Calu3 (cell line): ENCODE measurements at regions of chr12 and their contacts with region 1.

Region 1: GRCh38 chr12:87925021-87925420 is 104.2 kb downstream of the C12orf50 start:
- DNase-seq: no peak
- H3K4me3 Mint-ChIP-seq: no peak overlapping the region
- H3K27ac Mint-ChIP-seq: no peak overlapping the region
- H3K4me1 Mint-ChIP-seq: no peaks in the 10 kb centered on the region
- H3K27me3 Mint-ChIP-seq: no peaks in the 10 kb centered on the region
- CTCF ChIP-seq: no peak

Region 2: GRCh38 chr12:88351121-88351520 is 426.1 kb after region 1 on chr12:
- CTCF ChIA-PET with region 1: no interaction called
- intact Hi-C with region 1: loop called (anchors 5 kb)
- DNase-seq: no peak
- H3K4me3 Mint-ChIP-seq: no peak overlapping the region
- H3K27ac Mint-ChIP-seq: no peak overlapping the region
- H3K4me1 Mint-ChIP-seq: no peaks in the 10 kb centered on the region
- H3K27me3 Mint-ChIP-seq: no peaks in the 10 kb centered on the region
- CTCF ChIP-seq: no peak